ENCODE measurements at regions of chr7 and their contacts with region 1.

Region 1: DNA sequence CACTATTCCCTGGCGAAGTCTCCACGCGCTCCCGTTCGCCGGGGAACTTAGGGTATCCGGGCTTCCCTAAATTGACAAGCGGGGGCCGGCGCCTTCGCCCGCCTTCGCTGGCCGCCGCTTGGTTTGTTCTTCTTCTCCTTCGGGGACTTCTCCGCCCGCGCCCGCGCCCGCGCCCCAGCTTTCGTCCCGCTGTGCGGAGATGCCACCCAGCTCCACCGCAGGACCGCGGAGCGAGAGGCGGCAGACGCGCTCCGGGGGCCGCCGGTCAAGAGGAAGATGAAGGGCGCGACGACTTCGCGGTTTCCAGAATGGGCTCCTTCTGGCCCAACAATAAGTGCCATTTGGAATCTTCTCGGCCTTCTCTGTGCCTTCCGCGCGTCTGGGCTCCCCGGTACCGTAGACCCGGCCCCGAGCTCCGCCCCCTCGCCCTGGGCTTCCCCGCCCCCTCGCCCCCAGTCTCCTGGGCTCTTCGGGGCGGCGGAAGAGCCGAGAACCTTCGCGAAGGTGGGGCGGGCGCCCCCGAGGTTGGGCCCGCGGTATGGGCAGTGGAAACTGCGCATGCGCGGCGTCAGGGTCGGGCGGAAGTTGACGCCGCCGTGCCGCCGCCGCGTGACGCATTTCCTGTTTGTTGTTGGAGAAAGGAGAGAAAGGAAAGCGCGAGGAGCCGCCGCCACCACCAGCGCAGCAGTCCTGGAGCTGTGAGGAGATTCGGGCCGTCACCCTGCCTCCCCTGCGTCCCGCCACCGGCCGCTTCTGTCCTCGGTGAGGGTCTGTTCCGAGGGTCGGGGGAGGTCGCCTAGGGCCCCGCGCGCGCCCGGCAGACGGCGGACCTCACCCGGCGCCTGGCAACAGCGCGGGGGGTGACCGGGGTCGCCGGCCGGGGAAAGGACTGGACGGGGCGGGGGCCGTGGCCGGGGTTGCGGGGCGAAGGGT is at the start of gene DNAJB6:
- DNase-seq: peak; percentile 94
- H3K4me3 Mint-ChIP-seq: peak within 1 kb of the TSS; percentile 96
- H3K27ac Mint-ChIP-seq: peak within 1 kb of the TSS; percentile 100
- H3K4me1 Mint-ChIP-seq: peaks cover 31% of the 10 kb centered on the region
- H3K27me3 Mint-ChIP-seq: peaks cover 27% of the 10 kb centered on the region
- total RNA-seq, gene DNAJB6: 127 and 137 TPM in 2 replicates

Region 2: GRCh38 chr7:156892821-156893706 is 443.6 kb before region 1 on chr7 and contains the start of gene LMBR1:
- intact Hi-C with region 1: loop called (anchors 10 kb)
- DNase-seq: peak; percentile 92
- H3K4me3 Mint-ChIP-seq: peak within 1 kb of the TSS; percentile 95
- H3K27ac Mint-ChIP-seq: peak within 1 kb of the TSS; percentile 93
- H3K4me1 Mint-ChIP-seq: peaks cover 43% of the 10 kb centered on the region
- H3K27me3 Mint-ChIP-seq: no peaks in the 10 kb centered on the region
- total RNA-seq, gene LMBR1: 53.5 and 55.5 TPM in 2 replicates

Region 3: DNA sequence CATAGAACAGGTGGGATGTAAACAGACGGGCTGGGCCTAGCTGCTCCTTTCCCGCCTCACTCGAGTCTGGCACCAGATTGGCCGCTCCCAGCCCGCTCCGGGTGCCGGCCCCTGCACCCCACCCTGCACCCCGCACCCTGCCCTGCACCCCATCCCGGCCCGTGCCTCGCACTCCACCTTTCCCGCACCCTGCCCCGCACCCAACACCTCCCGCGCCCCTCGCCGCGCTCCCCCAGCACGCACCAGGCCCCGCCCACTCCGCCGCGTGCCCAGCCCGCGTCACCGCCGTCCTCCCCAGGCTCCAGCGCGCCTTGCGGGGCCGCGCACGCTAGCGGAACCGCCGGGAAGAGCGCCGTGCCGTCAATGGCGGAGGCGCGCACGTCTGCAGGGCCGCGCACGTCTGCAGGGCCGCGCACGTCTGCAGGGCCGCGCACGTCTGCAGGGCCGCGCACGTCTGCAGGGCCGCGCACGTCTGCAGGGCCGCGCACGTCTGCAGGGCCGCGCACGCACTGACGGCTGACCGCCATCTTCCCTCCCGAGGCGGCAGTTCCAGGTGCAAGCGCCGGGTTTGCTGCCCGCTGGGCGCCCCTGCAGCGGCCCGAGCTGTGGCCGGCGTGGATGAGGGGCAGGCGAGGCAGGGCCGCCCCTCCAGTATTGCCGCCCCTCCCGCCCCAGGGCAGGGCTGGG is 198.1 kb before region 1 on chr7 and contains the start of gene UBE3C:
- intact Hi-C with region 1: loop called (anchors 1 kb)
- DNase-seq: peak; percentile 89
- H3K4me3 Mint-ChIP-seq: peak within 1 kb of the TSS; percentile 88
- H3K27ac Mint-ChIP-seq: peak within 1 kb of the TSS; percentile 97
- H3K4me1 Mint-ChIP-seq: peaks cover 41% of the 10 kb centered on the region
- H3K27me3 Mint-ChIP-seq: no peaks in the 10 kb centered on the region
- total RNA-seq, gene UBE3C: 91.5 and 95.8 TPM in 2 replicates

Region 4: DNA sequence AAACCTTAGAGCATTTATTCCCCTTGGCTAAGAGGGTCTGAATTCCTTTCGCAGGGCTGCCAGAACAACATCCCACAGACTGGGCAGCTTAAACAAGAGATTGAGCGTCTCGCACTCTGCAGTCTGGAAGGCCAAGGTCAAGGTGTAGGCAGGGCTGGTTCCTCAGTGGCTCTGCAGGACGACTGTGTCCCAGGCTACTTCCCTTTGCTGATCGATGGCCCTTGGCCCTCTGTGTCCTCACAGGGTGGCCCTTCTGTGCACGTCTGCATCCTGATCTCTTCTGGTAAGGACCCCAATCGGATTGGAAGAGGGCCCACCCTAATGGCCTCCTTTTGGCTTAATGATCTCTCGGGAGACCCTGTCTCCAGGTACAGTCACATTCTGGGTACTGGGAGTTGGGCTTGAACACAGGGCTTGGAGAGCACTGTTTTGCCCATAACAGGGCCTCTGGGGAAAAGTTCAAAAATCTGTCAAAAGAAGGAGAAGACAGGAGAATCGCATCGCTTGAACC is 35.0 kb before region 1 on chr7:
- intact Hi-C with region 1: loop called (anchors 1 kb)
- DNase-seq: no peak
- H3K4me3 Mint-ChIP-seq: peak overlapping the region; percentile 32
- H3K27ac Mint-ChIP-seq: peak overlapping the region; percentile 98
- H3K4me1 Mint-ChIP-seq: peaks cover 44% of the 10 kb centered on the region
- H3K27me3 Mint-ChIP-seq: no peaks in the 10 kb centered on the region

Region 5: DNA sequence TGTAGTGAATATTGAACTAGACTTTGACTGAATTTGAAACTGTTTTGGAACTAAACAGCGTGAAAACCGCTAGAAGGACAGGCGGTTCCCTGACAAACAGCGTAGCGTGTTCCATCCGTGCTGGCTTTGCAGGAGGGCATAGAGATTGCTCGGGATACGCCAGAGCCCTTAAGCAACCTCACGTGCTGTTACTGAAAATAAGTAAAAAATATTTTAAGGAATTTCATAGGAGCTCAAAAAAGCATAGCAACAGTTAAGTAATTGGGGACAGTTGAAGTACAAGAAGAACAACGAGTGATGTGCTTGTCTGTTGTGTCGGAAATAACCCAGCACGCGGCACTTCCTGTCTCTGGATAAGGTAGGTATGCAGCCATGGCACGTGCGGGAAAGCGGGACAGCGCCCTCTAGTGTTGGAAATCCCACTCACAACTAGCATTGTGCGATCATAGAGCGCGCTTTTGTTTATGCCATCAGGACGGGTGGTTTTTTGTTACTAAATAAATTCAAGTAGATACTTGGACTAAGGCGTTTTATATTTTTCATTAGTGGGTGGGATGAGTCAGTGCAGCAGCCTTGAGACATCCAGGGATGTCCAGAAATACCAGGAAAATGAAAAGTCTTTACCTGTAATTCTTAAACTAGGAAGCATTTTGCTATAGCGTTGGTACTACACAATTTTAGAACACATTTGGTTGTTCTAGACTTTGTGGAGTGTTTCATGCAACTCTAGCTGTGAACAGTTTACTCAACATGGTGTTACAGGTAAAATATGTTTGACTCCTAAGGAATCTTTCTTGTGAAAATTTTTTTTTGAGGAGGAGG is 50.5 kb after region 1 on chr7:
- intact Hi-C with region 1: loop called (anchors 1 kb)
- DNase-seq: peak; percentile 78
- H3K4me3 Mint-ChIP-seq: no peak overlapping the region
- H3K27ac Mint-ChIP-seq: peak overlapping the region; percentile 57
- H3K4me1 Mint-ChIP-seq: peaks cover 38% of the 10 kb centered on the region
- H3K27me3 Mint-ChIP-seq: no peaks in the 10 kb centered on the region

Region 6: GRCh38 chr7:157840914-157841772 is 504.5 kb after region 1 on chr7:
- intact Hi-C with region 1: no loop called
- DNase-seq: no peak
- H3K4me3 Mint-ChIP-seq: no peak overlapping the region
- H3K27ac Mint-ChIP-seq: no peak overlapping the region
- H3K4me1 Mint-ChIP-seq: no peaks in the 10 kb centered on the region
- H3K27me3 Mint-ChIP-seq: no peaks in the 10 kb centered on the region